Activated CD8-positive, alpha-beta T cell treated with anti-CD3 and anti-CD28 coated beads, Interleukin-2, amount 10 ng/mL, durations not matched to agents 7 days and 5 days (primary cell): ENCODE measurements at regions of chr1 and their contacts with region 1.

Region 1: DNA sequence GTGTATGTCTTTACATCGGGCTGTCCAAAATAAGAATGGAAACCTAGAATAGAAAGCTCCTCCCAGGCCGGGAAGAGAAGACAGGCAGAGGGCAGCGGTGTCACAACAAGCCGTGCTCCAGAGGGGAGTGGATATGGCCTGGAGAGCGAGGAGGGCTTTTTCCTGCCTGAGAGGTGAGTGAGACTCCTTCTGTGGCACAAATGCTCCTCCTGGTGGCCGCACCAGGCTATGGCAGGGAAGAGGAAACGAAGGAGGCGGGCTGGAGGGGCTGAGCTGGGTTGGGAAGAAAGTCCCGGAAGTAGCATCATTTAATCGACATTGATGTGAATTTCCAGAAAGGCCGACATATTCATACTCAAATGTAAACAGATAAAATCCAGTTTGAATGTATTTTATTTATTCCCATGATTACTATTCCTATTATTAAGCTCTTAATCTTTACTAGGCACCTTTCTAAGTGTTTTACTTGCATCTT is 54.7 kb downstream of the MEF2D start:
- DNase-seq: peak; percentile 84
- ATAC-seq: peak; percentile 89
- H3K4me3 Mint-ChIP-seq: no peak overlapping the region
- H3K27ac Mint-ChIP-seq: no peak overlapping the region
- H3K4me1 Mint-ChIP-seq: peaks cover 9% of the 10 kb centered on the region
- H3K27me3 Mint-ChIP-seq: peaks cover 57% of the 10 kb centered on the region

Region 2: GRCh38 chr1:156356875-156357534 is 88.8 kb before region 1 on chr1:
- CTCF ChIA-PET with region 1: interaction called, 23 read pairs
- POLR2A ChIA-PET with region 1: no interaction called
- DNase-seq: peak; percentile 75
- ATAC-seq: peak; percentile 99
- H3K4me3 Mint-ChIP-seq: no peak overlapping the region
- H3K27ac Mint-ChIP-seq: no peak overlapping the region
- H3K4me1 Mint-ChIP-seq: peaks cover 6% of the 10 kb centered on the region
- H3K27me3 Mint-ChIP-seq: peaks cover 31% of the 10 kb centered on the region

Region 3: GRCh38 chr1:156388174-156389137 is 57.4 kb before region 1 on chr1:
- CTCF ChIA-PET with region 1: interaction called, 562 read pairs
- POLR2A ChIA-PET with region 1: interaction called, 18 read pairs
- DNase-seq: no peak
- ATAC-seq: no peak
- H3K4me3 Mint-ChIP-seq: no peak overlapping the region
- H3K27ac Mint-ChIP-seq: no peak overlapping the region
- H3K4me1 Mint-ChIP-seq: peaks cover 13% of the 10 kb centered on the region
- H3K27me3 Mint-ChIP-seq: peaks cover 35% of the 10 kb centered on the region

Region 4: DNA sequence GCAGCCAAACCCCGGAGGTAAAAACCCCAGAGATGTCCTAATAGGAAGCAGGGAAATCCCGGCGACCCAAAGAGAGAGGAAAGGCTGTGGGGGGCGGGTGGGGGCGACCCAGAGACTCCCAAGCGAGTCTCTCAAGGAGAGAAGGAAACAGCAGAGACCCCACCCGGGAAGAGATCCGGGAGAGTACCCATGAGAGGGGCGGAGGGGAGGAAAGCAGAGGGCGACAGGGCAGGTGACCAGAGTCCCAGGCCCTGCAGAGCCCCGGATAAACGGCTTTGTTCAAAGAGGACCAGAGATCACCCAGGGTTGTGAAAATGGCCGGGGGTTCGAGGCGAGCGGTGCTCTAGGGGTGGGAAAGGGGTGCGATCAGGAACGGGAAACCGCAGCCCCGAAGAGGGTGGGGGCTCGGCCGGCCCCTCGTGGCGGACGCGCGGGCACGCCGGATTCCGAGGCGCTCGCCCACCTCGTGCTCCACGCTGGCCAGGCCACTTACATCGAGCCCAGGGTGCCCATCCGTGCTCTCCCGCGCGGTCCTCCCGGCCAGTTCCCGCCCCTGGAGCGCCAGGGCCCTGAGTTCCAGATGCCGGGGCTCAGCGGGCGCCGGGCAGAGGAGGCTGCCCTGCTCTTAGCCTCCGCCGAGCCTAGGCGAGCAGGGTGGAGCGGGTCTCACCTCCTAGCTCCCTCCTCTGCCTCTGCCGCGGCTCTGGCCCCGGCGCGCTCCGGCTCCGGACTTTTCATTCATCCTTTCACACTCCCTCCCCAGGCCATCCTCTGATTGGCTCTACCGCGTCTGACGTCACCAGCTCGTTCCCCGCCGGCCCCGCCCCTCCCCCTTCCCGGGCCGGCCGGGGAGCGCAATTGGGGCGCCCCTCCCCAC is 24.5 kb before region 1 on chr1:
- CTCF ChIA-PET with region 1: interaction called, 28 read pairs
- POLR2A ChIA-PET with region 1: no interaction called
- DNase-seq: peak; percentile 78
- ATAC-seq: peak; percentile 73
- H3K4me3 Mint-ChIP-seq: peak overlapping the region; percentile 81
- H3K27ac Mint-ChIP-seq: no peak overlapping the region
- H3K4me1 Mint-ChIP-seq: peaks cover 22% of the 10 kb centered on the region
- H3K27me3 Mint-ChIP-seq: peaks cover 88% of the 10 kb centered on the region

Region 5: DNA sequence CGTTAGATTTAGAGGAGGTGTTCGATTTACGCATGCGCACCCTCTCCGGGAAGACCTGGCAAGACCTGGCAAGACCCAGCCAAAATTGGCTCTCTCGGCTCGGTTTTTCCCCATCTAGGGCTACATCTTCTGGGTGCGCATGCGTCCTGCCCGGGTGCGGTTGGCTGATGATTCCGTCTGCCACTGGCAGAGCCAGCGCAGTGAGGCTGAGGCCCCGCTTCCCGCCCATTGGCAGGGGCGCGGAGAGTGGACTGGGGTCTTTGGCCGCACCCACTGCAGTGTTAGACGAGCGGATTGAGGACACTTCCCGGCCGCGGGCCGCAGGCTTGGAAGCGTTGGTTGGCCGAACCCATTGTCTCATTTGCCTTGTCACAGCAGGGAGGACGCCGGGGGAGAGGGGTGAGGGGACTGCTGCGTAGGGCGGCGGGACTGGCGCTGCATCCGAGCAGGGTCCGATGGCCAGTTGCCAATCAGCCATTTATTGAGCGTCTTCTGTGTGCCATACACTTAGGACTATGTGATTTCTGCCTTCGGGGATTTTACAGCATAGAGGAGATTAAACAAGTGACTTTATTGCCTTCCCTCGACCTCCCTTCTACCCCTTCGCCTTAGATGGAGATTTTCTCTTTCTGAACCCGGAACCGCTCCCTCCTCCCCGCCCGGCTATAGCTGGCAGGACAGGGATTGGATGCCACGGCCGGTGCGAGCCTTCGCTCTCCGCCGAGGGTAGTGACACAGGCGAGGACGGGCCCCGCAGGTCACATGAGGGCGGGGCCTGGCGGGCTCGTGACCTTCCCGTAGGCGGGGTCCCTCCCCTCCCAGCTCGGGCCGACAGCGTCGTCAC is 11.0 kb after region 1 on chr1:
- CTCF ChIA-PET with region 1: interaction called, 23 read pairs
- POLR2A ChIA-PET with region 1: no interaction called
- DNase-seq: peak; percentile 97
- ATAC-seq: peak; percentile 88
- H3K4me3 Mint-ChIP-seq: peak overlapping the region; percentile 84
- H3K27ac Mint-ChIP-seq: peak overlapping the region; percentile 95
- H3K4me1 Mint-ChIP-seq: peaks cover 18% of the 10 kb centered on the region
- H3K27me3 Mint-ChIP-seq: peaks cover 15% of the 10 kb centered on the region

Region 6: GRCh38 chr1:156500797-156501499 is 55.1 kb after region 1 on chr1:
- CTCF ChIA-PET with region 1: interaction called, 10 read pairs
- POLR2A ChIA-PET with region 1: interaction called, 3 read pairs
- DNase-seq: peak; percentile 95
- ATAC-seq: peak; percentile 73
- H3K4me3 Mint-ChIP-seq: peak overlapping the region; percentile 87
- H3K27ac Mint-ChIP-seq: peak overlapping the region; percentile 99
- H3K4me1 Mint-ChIP-seq: peaks cover 76% of the 10 kb centered on the region
- H3K27me3 Mint-ChIP-seq: no peaks in the 10 kb centered on the region

Region 7: GRCh38 chr1:156608036-156608674 is 162.3 kb after region 1 on chr1:
- CTCF ChIA-PET with region 1: interaction called, 18 read pairs
- POLR2A ChIA-PET with region 1: no interaction called
- DNase-seq: peak; percentile 83
- ATAC-seq: peak; percentile 96
- H3K4me3 Mint-ChIP-seq: no peak overlapping the region
- H3K27ac Mint-ChIP-seq: no peak overlapping the region
- H3K4me1 Mint-ChIP-seq: peaks cover 15% of the 10 kb centered on the region
- H3K27me3 Mint-ChIP-seq: peaks cover 16% of the 10 kb centered on the region